Kidney (tissue), 22 donors: ENCODE measurements at regions of chr9 and their contacts with region 1.

Region 1: GRCh38 chr9:84397151-84397728 is 56.7 kb upstream of the SLC28A3 start:
- DNase-seq: peak; percentile 75 to 93 (median 89)
- H3K4me3 ChIP-seq: no peak overlapping the region
- H3K27ac ChIP-seq: no peak overlapping the region
- H3K4me1 ChIP-seq: no peaks in the 10 kb centered on the region
- H3K27me3 ChIP-seq: no peaks in the 10 kb centered on the region
- CTCF ChIP-seq: peak; percentile 87

Region 2: GRCh38 chr9:84570482-84571154 is 173.4 kb after region 1 on chr9:
- intact Hi-C with region 1: no loop called
- DNase-seq: no peak
- H3K4me3 ChIP-seq: no peak overlapping the region
- H3K27ac ChIP-seq: no peak overlapping the region
- H3K4me1 ChIP-seq: no peaks in the 10 kb centered on the region
- H3K27me3 ChIP-seq: no peaks in the 10 kb centered on the region
- CTCF ChIP-seq: no peak

Region 3: DNA sequence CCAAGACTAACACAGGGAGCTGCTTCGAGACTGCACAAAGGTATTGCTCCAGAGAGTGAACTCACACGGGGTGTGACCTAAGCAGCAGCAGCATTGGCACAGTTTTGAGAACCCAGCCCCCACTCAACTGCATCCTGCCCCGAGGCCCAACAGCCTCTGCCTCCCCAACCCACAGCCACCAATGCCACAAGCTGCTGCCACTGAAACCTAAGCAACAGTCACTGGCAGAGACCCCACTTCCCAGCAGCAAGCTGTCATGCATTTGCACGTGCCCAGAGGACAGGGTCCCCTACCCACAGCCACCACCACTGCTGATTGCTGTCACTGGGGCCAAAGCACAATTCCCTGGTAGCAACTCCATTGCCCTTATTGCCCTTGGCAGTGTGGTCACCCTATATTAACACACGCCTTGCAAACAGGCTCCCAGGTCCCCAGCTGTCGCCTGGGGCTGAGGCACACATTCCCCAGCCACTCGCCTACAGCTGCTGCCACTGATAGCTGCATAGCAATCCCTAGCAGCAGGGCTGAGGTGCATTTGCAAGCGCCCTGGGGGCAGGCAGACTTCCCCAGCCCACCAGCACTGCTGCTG is 1203.5 kb after region 1 on chr9:
- intact Hi-C with region 1: loop called (anchors 10 kb)
- DNase-seq: no peak
- H3K4me3 ChIP-seq: no peak overlapping the region
- H3K27ac ChIP-seq: no peak overlapping the region
- H3K4me1 ChIP-seq: no peaks in the 10 kb centered on the region
- H3K27me3 ChIP-seq: no peaks in the 10 kb centered on the region
- CTCF ChIP-seq: no peak